CD14-positive monocyte (primary cell): ENCODE measurements at regions of chr2 and their contacts with region 1.

Region 1: DNA sequence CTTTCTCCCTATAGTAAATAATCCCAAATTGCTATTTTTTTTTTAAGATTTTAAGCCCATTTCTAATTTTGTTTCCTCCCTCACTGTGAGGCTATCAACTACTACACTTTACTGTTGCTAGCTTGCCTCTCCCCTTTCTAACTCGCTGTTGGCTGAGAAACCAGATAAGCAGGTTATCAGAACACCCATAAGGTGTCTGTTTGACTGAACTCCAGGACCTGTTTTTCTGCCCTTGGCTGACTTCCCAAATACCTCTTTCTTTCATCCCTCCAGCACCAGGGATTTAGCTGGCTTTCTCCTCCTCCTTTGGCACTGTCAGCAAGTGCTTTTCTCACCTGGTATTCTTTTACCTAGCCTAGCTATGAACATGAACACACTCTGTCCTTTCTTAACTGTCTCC is 11.1 kb downstream of the TRAK2 start:
- DNase-seq: no peak
- H3K4me3 ChIP-seq: no peak overlapping the region
- H3K4me3 Mint-ChIP-seq: no peak overlapping the region
- H3K27ac ChIP-seq: no peak overlapping the region
- H3K27ac Mint-ChIP-seq: no peak overlapping the region
- H3K4me1 ChIP-seq: peaks cover 4 to 7% of the 10 kb centered on the region in 2 donors
- H3K4me1 Mint-ChIP-seq: no peaks in the 10 kb centered on the region
- H3K27me3 ChIP-seq: no peaks in the 10 kb centered on the region
- H3K27me3 Mint-ChIP-seq: no peaks in the 10 kb centered on the region
- CTCF ChIP-seq: no peak

Region 2: GRCh38 chr2:201780674-201781581 is 340.7 kb after region 1 on chr2 and contains the start of gene ALS2:
- intact Hi-C with region 1: loop called in 1 of 2 experiments (anchors 10 kb)
- DNase-seq: peak; percentile 85 to 87 (median 87)
- H3K4me3 ChIP-seq: peak within 1 kb of the TSS; percentile 77 to 98 (median 92)
- H3K4me3 Mint-ChIP-seq: peak within 1 kb of the TSS; percentile 96 to 98
- H3K27ac ChIP-seq: peak within 1 kb of the TSS; percentile 29 to 93
- H3K27ac Mint-ChIP-seq: peak within 1 kb of the TSS; percentile 92 to 99 (median 97)
- H3K4me1 ChIP-seq: peaks cover 16 to 18% of the 10 kb centered on the region in 2 donors
- H3K4me1 Mint-ChIP-seq: peaks cover 23% of the 10 kb centered on the region
- H3K27me3 ChIP-seq: no peaks in the 10 kb centered on the region
- H3K27me3 Mint-ChIP-seq: peaks cover 0 to 9% (median 5%) of the 10 kb centered on the region in 3 donors
- CTCF ChIP-seq: no peak
- polyA plus RNA-seq, gene ALS2: 2.6 to 4.7 (median 3.1) TPM